ENCODE measurements at regions of chr12 and their contacts with region 1.

Region 1: GRCh38 chr12:51238510-51239334 is at the start of gene DAZAP2:
- DNase-seq: peak; percentile 89
- ATAC-seq: peak; percentile 91
- H3K4me3 Mint-ChIP-seq: peak within 1 kb of the TSS; percentile 98
- H3K27ac Mint-ChIP-seq: peak within 1 kb of the TSS; percentile 100
- H3K4me1 Mint-ChIP-seq: peaks cover 43% of the 10 kb centered on the region
- H3K27me3 Mint-ChIP-seq: no peaks in the 10 kb centered on the region
- CTCF ChIP-seq: no peak
- total RNA-seq, gene DAZAP2: 209 and 214 TPM in 2 replicates

Region 2: GRCh38 chr12:50025187-50026059 is 1213.3 kb before region 1 on chr12 and contains the start of gene RACGAP1:
- CTCF ChIA-PET with region 1: no interaction called
- POLR2A ChIA-PET with region 1: no interaction called
- intact Hi-C with region 1: loop called (anchors 10 kb)
- DNase-seq: peak; percentile 83
- ATAC-seq: peak; percentile 97
- H3K4me3 Mint-ChIP-seq: peak within 1 kb of the TSS; percentile 96
- H3K27ac Mint-ChIP-seq: peak within 1 kb of the TSS; percentile 79
- H3K4me1 Mint-ChIP-seq: peaks cover 16% of the 10 kb centered on the region
- H3K27me3 Mint-ChIP-seq: no peaks in the 10 kb centered on the region
- CTCF ChIP-seq: no peak
- total RNA-seq, gene RACGAP1: 12.2 and 12.6 TPM in 2 replicates

Region 3: GRCh38 chr12:51047655-51048540 is 190.8 kb before region 1 on chr12 and contains the start of gene LETMD1:
- CTCF ChIA-PET with region 1: no interaction called
- POLR2A ChIA-PET with region 1: interaction called, 3 read pairs
- intact Hi-C with region 1: loop called (anchors 1 kb)
- DNase-seq: peak; percentile 81
- ATAC-seq: peak; percentile 96
- H3K4me3 Mint-ChIP-seq: peak within 1 kb of the TSS; percentile 92
- H3K27ac Mint-ChIP-seq: peak within 1 kb of the TSS; percentile 87
- H3K4me1 Mint-ChIP-seq: peaks cover 30% of the 10 kb centered on the region
- H3K27me3 Mint-ChIP-seq: no peaks in the 10 kb centered on the region
- CTCF ChIP-seq: peak; percentile 64
- total RNA-seq, gene LETMD1: 82.8 and 92.0 TPM in 2 replicates

Region 4: DNA sequence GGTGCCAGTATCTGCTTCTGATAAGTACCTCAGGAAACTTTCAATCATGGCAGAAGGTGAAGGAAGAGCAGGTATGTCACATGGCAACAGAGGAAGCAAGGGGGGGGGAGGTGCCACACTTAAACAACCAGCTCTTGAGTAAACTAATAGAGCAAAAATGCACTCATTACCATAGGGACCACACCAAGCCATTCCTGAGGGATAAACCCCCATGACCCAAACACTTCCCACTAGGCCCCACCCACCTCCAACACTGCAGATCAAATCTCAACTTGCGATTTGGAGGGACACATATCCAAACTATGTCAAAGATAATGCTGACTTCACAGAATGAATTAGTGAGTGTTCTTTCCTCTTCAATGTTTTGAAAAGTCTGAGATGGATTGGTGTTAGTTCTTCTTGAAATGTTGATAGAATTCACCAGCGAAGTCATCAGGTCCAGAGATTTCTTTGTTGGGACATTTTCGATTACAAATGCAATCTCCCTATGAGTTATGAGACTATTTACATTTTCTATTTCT is 82.4 kb before region 1 on chr12:
- CTCF ChIA-PET with region 1: no interaction called
- POLR2A ChIA-PET with region 1: no interaction called
- intact Hi-C with region 1: no loop called
- DNase-seq: no peak
- ATAC-seq: no peak
- H3K4me3 Mint-ChIP-seq: no peak overlapping the region
- H3K27ac Mint-ChIP-seq: no peak overlapping the region
- H3K4me1 Mint-ChIP-seq: peaks cover 4% of the 10 kb centered on the region
- H3K27me3 Mint-ChIP-seq: no peaks in the 10 kb centered on the region
- CTCF ChIP-seq: no peak

Region 5: DNA sequence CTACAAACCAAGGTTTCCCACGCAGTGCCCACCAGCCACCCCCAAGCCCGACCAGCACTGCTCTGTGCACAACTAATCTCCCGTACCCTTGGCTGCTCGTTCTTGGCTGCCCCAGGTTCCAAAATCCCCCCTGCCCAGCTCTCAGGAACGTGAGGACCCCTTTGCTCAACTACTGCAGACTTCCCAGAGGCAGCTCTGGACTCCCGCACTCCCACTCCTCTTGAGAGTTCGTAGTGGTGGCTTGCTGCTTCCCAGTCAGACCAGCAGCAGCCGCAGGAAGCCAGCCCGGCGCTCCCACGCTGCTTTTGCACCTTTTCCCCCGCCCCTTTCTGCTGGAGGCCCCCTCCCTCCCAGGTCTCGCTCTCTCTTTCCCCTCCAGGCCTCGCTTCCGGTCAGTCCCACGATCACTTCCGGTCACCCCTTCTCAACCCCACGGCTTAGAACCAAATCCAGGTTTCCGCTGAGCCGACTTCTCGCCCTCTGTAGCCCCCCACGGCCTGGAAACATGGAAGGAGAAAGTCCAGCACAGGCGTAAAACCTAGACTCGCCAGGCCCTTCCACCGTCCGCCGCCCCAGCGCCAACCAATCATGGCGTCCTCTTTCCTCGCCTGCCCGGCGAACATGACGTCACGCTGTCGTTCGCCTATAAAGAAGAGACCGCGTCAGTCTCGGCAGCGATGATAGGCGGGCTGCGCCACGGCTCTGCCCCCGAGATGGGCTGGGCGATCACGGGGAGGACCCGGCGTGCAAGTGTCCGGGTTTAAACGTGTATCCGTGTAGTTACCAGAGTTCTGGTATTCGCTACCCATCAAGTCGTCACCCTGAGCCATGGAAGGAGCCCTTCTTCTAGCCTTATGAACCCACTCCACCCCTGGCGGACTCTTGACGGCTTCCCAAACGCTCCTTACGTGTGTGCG is 65.9 kb before region 1 on chr12 and contains the start of gene TFCP2:
- CTCF ChIA-PET with region 1: no interaction called
- POLR2A ChIA-PET with region 1: interaction called, 7 read pairs
- intact Hi-C with region 1: loop called (anchors 1 kb)
- DNase-seq: peak; percentile 84
- ATAC-seq: peak; percentile 98
- H3K4me3 Mint-ChIP-seq: peak within 1 kb of the TSS; percentile 77
- H3K27ac Mint-ChIP-seq: peak within 1 kb of the TSS; percentile 68
- H3K4me1 Mint-ChIP-seq: peaks cover 9% of the 10 kb centered on the region
- H3K27me3 Mint-ChIP-seq: no peaks in the 10 kb centered on the region
- CTCF ChIP-seq: no peak
- total RNA-seq, gene TFCP2: 34.9 and 36.7 TPM in 2 replicates

Region 6: GRCh38 chr12:51270067-51270970 is 31.6 kb after region 1 on chr12 and contains the start of gene SMAGP:
- CTCF ChIA-PET with region 1: interaction called, 3 read pairs
- POLR2A ChIA-PET with region 1: interaction called, 18 read pairs
- intact Hi-C with region 1: loop called (anchors 2 kb)
- DNase-seq: peak; percentile 69
- ATAC-seq: peak; percentile 73
- H3K4me3 Mint-ChIP-seq: peak within 1 kb of the TSS; percentile 89
- H3K27ac Mint-ChIP-seq: peak within 1 kb of the TSS; percentile 80
- H3K4me1 Mint-ChIP-seq: peaks cover 26% of the 10 kb centered on the region
- H3K27me3 Mint-ChIP-seq: no peaks in the 10 kb centered on the region
- CTCF ChIP-seq: no peak
- total RNA-seq, gene SMAGP: 11.4 and 11.5 TPM in 2 replicates

Measured in activated B cell treated with CpG ODN at 0.5 μM for 24 hours (primary cell).